ENCODE measurements at regions of chr6 and their contacts with region 1.

Region 1: GRCh38 chr6:3990692-3991501 is 88.0 kb downstream of the FAM217A start:
- DNase-seq: peak; percentile 91
- ATAC-seq: peak; percentile 94
- H3K4me3 ChIP-seq: peak overlapping the region; percentile 61
- H3K27ac ChIP-seq: no peak overlapping the region
- H3K4me1 ChIP-seq: peaks cover 7% of the 10 kb centered on the region; the same call in 1 of the 2 replicates
- H3K27me3 ChIP-seq: no peaks in the 10 kb centered on the region
- CTCF ChIP-seq: peak; percentile 96

Region 2: GRCh38 chr6:3281631-3282475 is 709.0 kb before region 1 on chr6:
- CTCF ChIA-PET with region 1: interaction called, 3 read pairs
- POLR2A ChIA-PET with region 1: no interaction called
- intact Hi-C with region 1: loop called (anchors 10 kb)
- DNase-seq: peak; percentile 97
- ATAC-seq: peak; percentile 97
- H3K4me3 ChIP-seq: peak overlapping the region; percentile 26; the same call in 1 of the 2 replicates
- H3K27ac ChIP-seq: peak overlapping the region; percentile 89
- H3K4me1 ChIP-seq: peaks cover 25% of the 10 kb centered on the region
- H3K27me3 ChIP-seq: no peaks in the 10 kb centered on the region
- CTCF ChIP-seq: no peak

Region 3: DNA sequence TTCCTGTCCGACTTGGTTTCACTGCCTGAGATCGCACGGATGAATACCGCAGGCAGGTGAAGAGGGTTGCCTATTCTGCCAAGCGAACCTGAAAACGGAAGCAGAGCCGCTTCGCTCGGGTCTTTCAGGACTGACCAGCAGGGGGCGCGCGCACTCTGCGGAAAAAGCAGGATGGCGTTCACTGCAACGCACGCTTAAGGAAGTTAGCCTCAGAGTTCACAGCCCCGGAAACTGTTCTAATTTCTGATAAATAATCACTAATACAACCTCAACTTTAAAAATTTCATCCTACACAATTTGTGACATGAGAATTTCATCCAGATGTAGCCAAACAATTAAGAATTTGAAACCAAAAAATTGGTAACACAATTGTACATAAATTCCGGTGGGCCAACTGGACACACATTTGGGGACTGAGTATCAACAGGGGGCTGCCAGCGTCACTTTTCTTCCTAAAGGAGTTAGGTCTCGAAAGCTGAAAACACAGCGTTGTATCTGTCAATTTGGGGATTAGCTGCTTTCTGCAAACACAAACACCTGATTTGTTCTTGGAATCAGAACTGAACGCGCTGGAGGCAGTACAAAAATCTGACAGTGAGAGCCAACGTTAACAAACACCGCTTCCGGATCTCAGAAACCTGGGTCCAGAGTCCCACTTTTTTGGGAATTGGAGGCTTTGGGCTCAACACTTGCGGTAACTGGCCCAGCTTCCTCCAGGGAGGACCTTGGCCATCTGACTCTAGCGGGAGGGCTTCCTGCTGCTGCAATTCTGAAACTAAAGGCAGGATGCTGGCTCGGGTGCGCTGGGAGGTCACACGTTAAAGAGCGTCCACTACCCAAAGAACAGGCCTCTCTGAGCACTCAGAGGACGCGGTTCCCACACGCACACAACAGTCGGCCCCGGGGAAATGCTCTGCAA is 248.2 kb before region 1 on chr6:
- CTCF ChIA-PET with region 1: no interaction called
- POLR2A ChIA-PET with region 1: no interaction called
- intact Hi-C with region 1: loop called (anchors 1 kb)
- DNase-seq: peak; percentile 91
- ATAC-seq: peak; percentile 83
- H3K4me3 ChIP-seq: peak overlapping the region; percentile 58
- H3K27ac ChIP-seq: no peak overlapping the region
- H3K4me1 ChIP-seq: peaks cover 27% of the 10 kb centered on the region
- H3K27me3 ChIP-seq: no peaks in the 10 kb centered on the region
- CTCF ChIP-seq: peak; percentile 98

Region 4: DNA sequence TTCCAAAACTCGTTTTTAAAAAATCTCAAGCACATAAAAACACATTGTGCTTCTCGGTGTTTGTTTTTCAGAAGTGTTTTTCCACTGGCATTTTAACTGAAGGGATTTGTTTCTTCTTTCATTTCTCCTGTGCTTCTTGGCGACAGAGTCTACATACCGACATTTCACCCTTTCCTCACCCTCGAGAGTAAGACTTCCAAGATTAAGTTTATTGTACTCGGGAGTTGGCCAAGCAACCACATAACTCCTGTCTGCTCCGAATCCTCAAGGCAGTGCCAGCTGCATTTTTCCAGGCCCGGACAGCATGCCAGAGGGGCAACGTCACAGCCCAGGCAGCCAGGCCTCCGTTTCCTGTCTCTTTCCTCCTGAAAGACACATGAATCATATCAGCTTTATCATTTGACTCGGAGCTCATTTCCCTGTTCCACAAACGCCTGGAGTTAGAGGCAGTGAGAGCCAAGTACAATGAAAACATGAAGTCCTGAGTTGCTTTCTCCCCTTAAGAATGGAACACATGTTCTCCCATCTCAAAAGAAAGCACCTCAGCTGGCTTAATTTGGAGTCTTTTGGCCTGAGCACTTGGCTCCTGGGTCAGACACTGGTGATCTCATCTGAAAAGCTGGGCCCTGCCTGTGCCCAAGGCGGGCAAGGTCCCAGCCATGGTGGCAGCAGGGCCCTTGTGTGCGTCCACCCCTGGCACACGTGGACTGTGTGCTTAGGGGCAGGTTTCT is 164.9 kb before region 1 on chr6:
- CTCF ChIA-PET with region 1: interaction called, 4 read pairs
- POLR2A ChIA-PET with region 1: no interaction called
- intact Hi-C with region 1: loop called (anchors 5 kb)
- DNase-seq: peak; percentile 97
- ATAC-seq: peak; percentile 94
- H3K4me3 ChIP-seq: peak overlapping the region; percentile 38; the same call in 1 of the 2 replicates
- H3K27ac ChIP-seq: peak overlapping the region; percentile 84
- H3K4me1 ChIP-seq: peaks cover 45% of the 10 kb centered on the region
- H3K27me3 ChIP-seq: no peaks in the 10 kb centered on the region
- CTCF ChIP-seq: no peak

Region 5: GRCh38 chr6:3841711-3842565 is 149.0 kb before region 1 on chr6:
- CTCF ChIA-PET with region 1: interaction called, 4 read pairs
- POLR2A ChIA-PET with region 1: no interaction called
- intact Hi-C with region 1: loop called (anchors 5 kb)
- DNase-seq: peak; percentile 88
- ATAC-seq: peak; percentile 72
- H3K4me3 ChIP-seq: no peak overlapping the region
- H3K27ac ChIP-seq: no peak overlapping the region
- H3K4me1 ChIP-seq: peaks cover 48% of the 10 kb centered on the region
- H3K27me3 ChIP-seq: no peaks in the 10 kb centered on the region
- CTCF ChIP-seq: no peak

Region 6: GRCh38 chr6:3868544-3868943 is 122.4 kb before region 1 on chr6:
- CTCF ChIA-PET with region 1: no interaction called
- POLR2A ChIA-PET with region 1: no interaction called
- intact Hi-C with region 1: no loop called
- DNase-seq: no peak
- ATAC-seq: no peak
- H3K4me3 ChIP-seq: no peak overlapping the region
- H3K27ac ChIP-seq: no peak overlapping the region
- H3K4me1 ChIP-seq: peaks cover 9% of the 10 kb centered on the region
- H3K27me3 ChIP-seq: no peaks in the 10 kb centered on the region
- CTCF ChIP-seq: no peak

Region 7: GRCh38 chr6:3929281-3929798 is 61.6 kb before region 1 on chr6:
- CTCF ChIA-PET with region 1: interaction called, 3 read pairs
- POLR2A ChIA-PET with region 1: no interaction called
- intact Hi-C with region 1: loop called (anchors 5 kb)
- DNase-seq: no peak
- ATAC-seq: no peak
- H3K4me3 ChIP-seq: no peak overlapping the region
- H3K27ac ChIP-seq: no peak overlapping the region
- H3K4me1 ChIP-seq: peaks cover 5% of the 10 kb centered on the region; the same call in 1 of the 2 replicates
- H3K27me3 ChIP-seq: no peaks in the 10 kb centered on the region
- CTCF ChIP-seq: no peak

Region 8: GRCh38 chr6:4018172-4018905 is 27.4 kb after region 1 on chr6:
- CTCF ChIA-PET with region 1: no interaction called
- POLR2A ChIA-PET with region 1: interaction called, 22 read pairs
- intact Hi-C with region 1: no loop called
- DNase-seq: peak; percentile 98
- ATAC-seq: peak; percentile 66
- H3K4me3 ChIP-seq: peak overlapping the region; percentile 93
- H3K27ac ChIP-seq: peak overlapping the region; percentile 91
- H3K4me1 ChIP-seq: peaks cover 35% of the 10 kb centered on the region
- H3K27me3 ChIP-seq: no peaks in the 10 kb centered on the region
- CTCF ChIP-seq: peak; percentile 53